Ascending aorta (tissue), 2 donors: ENCODE measurements at regions of chr14 and their contacts with region 1.

Region 1: DNA sequence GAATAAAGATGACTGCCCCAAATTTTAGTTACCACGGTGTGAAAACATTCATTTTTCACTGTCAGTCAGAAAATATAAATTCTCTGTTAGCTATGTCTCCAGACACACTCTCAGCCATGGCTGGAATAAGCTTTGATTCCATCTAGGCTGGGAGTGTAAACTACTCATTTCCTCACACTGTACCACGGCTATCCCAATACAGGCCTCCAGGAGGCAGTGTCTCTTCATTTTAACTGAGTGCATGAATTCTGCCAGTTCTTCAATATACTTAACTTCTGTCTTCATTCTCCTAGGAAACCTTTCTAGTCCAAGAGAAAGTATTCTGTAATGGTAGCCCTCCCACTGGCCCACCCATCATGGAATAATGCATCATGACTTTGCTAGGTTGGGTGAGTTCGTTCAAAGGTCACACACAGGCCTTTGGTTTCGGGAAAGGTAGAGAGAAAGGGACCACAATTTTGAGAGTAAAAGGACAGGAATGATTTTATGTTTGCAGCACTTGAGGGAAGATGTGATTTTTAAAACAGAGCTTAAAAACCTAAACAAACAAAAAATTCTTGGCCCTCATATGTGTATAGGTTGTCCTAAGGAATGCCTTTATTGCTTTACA is 381.1 kb downstream of the SEC23A start:
- DNase-seq: peak in 1 of 2 donors; percentile 77
- H3K4me3 ChIP-seq: no peak overlapping the region
- H3K27ac ChIP-seq: no peak overlapping the region
- H3K4me1 ChIP-seq: no peaks in the 10 kb centered on the region
- H3K27me3 ChIP-seq: no peaks in the 10 kb centered on the region
- CTCF ChIP-seq: peak; percentile 47 to 74 (median 60)

Region 2: DNA sequence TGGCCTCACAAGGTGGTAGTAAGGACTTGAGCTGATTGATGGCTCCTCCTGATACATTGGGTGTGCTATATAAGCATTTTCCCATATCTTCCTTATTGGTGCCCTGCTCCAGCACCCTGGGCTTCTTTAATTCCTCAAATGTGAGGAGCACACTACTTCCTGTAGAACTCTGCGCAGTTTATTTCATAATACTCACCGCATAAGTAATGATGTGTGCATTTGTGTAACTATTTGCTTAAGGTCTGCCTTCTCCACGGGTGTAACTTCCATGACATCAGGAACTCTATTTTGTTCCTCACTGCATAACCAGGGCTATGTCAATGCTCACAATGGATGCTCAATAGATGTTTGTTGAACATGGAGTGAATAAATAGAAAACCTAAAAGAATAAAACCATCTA is 11.0 kb before region 1 on chr14:
- intact Hi-C with region 1: no loop called
- DNase-seq: no peak
- H3K4me3 ChIP-seq: no peak overlapping the region
- H3K27ac ChIP-seq: no peak overlapping the region
- H3K4me1 ChIP-seq: no peaks in the 10 kb centered on the region
- H3K27me3 ChIP-seq: no peaks in the 10 kb centered on the region
- CTCF ChIP-seq: no peak

Region 3: GRCh38 chr14:38867561-38868150 is 145.7 kb after region 1 on chr14:
- intact Hi-C with region 1: loop called (anchors 1 kb)
- DNase-seq: peak in 1 of 2 donors; percentile 80
- H3K4me3 ChIP-seq: no peak overlapping the region
- H3K27ac ChIP-seq: no peak overlapping the region
- H3K4me1 ChIP-seq: no peaks in the 10 kb centered on the region
- H3K27me3 ChIP-seq: no peaks in the 10 kb centered on the region
- CTCF ChIP-seq: peak; percentile 58 to 79 (median 63)